Sciatic nerve (tissue), 2 donors: ENCODE measurements at regions of chr3 and their contacts with region 1.

Region 1: GRCh38 chr3:190826018-190826417 is 36.5 kb downstream of the GMNC start:
- DNase-seq: no peak
- ATAC-seq: peak; percentile 67

Region 2: DNA sequence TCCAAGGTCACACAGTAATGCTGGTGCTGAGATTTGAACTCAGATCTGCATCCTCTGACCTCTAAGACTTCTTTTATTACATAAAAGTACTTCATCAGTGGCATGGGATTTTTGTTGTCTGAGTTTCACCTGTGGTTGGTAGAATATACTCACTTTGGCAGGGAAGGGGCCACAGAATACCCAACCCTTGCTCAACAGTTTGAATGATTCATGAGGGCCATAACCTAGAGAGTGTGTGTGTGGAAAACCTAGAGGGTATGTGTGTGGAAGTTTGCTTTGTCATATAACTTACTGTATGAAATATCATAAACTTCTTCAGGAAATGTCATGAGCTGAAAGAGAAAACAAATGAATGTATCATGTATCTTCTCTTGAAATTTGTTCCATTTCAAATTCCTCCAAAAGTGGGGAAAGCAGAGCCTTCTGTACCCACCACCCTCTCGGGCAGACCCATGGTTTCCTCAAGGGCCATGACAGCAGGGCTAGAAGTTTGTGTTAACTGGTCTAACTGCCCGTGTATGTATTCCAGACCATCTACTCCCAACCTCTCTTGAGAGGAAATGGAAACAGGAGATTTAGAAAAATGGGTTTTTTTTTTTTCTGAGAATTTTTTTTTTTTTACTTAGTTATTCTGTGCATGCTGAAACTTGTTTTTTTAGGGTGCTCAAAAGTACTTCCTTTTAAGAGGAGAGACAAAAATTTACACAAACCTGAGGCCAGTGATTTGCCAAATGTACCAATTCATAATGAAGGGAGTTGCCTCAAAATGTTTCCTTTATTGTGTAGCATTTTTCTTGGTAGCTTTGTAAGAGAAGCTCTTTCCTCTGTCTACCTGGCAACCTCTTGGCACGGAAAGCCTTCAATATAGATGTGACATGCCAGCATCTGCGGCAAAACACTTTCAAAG is 1527.3 kb before region 1 on chr3:
- intact Hi-C with region 1: loop called (anchors 5 kb)
- DNase-seq: no peak
- ATAC-seq: no peak

Region 3: DNA sequence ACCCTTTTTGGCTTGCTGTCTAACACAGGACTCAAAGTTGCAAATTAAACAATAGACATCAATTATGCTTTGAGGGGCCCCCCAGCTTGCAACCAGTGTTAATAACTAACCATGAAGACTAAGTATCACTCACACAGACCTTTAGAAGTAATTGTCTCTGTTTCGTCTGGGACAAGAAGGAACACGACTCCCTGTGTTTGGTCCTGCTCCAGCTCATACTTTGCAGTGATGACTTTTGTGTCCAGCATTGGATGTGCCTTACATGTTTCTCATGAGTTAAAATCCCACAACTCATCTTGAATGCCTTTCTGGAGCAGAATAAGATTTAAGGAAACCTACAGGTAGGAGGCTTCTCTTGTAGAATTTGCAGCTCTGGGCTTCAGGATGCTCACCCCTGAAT is 16.7 kb before region 1 on chr3:
- intact Hi-C with region 1: loop called (anchors 1 kb)
- DNase-seq: no peak
- ATAC-seq: no peak